HepG2 (cell line): ENCODE measurements at regions of chr3 and their contacts with region 1.

Region 1: DNA sequence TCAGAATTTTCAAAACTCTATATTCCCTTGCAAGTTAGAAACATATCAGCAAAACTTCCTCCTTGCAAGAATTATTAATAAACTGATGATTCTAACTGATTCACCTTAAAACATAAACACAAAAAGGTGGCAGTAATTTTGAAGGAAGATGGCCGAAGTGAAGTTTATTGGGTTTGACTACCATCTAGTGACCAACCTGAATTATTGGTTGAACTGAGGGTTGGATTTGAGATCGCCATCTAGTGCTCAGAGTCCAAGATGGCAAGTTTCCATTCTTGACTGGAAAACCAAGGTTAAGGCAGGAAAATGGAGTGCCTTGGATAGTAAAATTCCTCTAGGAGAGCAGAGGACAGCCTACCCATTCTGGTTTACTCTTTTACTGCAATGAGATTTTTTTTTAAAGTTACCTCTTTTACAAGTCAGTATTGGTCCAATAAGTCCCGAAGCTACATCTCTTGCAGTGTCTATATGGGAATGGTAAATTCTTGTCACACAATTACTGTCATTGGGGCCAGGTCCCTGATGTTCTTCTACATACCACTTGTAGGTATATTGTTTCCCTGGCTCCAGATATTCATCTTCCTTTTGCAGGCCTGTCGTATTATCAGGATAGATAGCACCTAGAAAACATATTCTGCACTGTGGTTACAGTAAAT is 51.6 kb upstream of the CP start:
- DNase-seq: peak; percentile 81
- ATAC-seq: peak; percentile 81
- H3K4me3 ChIP-seq: no peak overlapping the region
- H3K27ac ChIP-seq: no peak overlapping the region
- H3K4me1 ChIP-seq: peaks cover 44% of the 10 kb centered on the region
- H3K27me3 ChIP-seq: no peaks in the 10 kb centered on the region
- CTCF ChIP-seq: peak; percentile 96
- EP300 ChIP-seq: no peak
- POLR2A ChIP-seq: no peak
- RAD21 ChIP-seq: peak; percentile 96

Region 2: GRCh38 chr3:149114458-149114857 is 158.8 kb before region 1 on chr3:
- CTCF ChIA-PET with region 1: interaction called, 123 read pairs
- POLR2A ChIA-PET with region 1: no interaction called
- in situ Hi-C with region 1: loop called (anchors 5 kb)
- intact Hi-C with region 1: no loop called
- DNase-seq: no peak
- ATAC-seq: no peak
- H3K4me3 ChIP-seq: no peak overlapping the region
- H3K27ac ChIP-seq: no peak overlapping the region
- H3K4me1 ChIP-seq: peaks cover 12% of the 10 kb centered on the region; the same call in 1 of the 2 replicates
- H3K27me3 ChIP-seq: peaks cover 2 to 10% of the 10 kb centered on the region in 2 experiments; a peak in 2 of 5 replicates
- CTCF ChIP-seq: no peak
- EP300 ChIP-seq: no peak
- POLR2A ChIP-seq: no peak
- RAD21 ChIP-seq: no peak

Region 3: GRCh38 chr3:149120051-149120972 is 152.9 kb before region 1 on chr3:
- CTCF ChIA-PET with region 1: interaction called, 123 read pairs
- POLR2A ChIA-PET with region 1: no interaction called
- in situ Hi-C with region 1: loop called (anchors 5 kb)
- intact Hi-C with region 1: loop called (anchors 1 kb)
- DNase-seq: peak; percentile 62
- ATAC-seq: peak; percentile 83
- H3K4me3 ChIP-seq: no peak overlapping the region
- H3K27ac ChIP-seq: no peak overlapping the region
- H3K4me1 ChIP-seq: peaks cover 26% of the 10 kb centered on the region; the same call in 1 of the 2 replicates
- H3K27me3 ChIP-seq: peaks cover 2 to 10% of the 10 kb centered on the region in 2 experiments; a peak in 2 of 5 replicates
- CTCF ChIP-seq: peak; percentile 78
- EP300 ChIP-seq: no peak
- POLR2A ChIP-seq: no peak
- RAD21 ChIP-seq: peak; percentile 65; the same call in 1 of the 2 replicates